Activated CD4-positive, alpha-beta memory T cell treated with anti-CD3 and anti-CD28 coated beads for 36 hours (primary cell): ENCODE measurements at regions of chr4 and their contacts with region 1.

Region 1: GRCh38 chr4:140252742-140253555 is 99.0 kb upstream of the MAML3 start:
- DNase-seq: peak; percentile 63
- H3K4me3 Mint-ChIP-seq: peak overlapping the region; percentile 55
- H3K27ac Mint-ChIP-seq: no peak overlapping the region
- H3K4me1 Mint-ChIP-seq: peaks cover 17% of the 10 kb centered on the region
- H3K27me3 Mint-ChIP-seq: peaks cover 20% of the 10 kb centered on the region

Region 2: DNA sequence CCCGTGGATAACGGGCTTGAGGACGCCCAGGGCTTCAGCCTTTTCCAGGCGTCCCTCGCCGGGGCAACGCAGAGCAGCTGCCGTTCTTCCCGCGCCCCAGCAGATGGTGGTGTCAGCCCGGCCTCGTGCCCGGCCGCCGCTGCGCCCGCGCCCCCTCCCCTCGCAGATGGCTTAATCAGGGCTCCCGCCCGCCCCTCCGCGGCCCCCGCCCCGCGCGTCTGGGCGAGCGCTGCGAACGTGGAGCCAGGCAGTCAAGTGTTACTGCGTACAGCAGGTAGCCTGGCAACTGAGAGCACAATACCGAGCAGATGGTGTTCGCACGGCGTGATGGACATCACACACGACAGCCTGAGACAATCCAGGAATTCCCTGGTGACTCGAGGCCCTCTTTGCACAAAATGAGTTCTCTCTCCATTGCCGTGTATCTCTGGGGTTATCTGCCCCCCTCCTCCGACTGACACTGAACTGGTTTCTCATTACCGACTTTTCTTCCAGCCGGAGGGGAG is 518.0 kb before region 1 on chr4:
- CTCF ChIA-PET with region 1: interaction called, 20 read pairs
- POLR2A ChIA-PET with region 1: no interaction called
- intact Hi-C with region 1: loop called (anchors 5 kb)
- DNase-seq: peak; percentile 73
- H3K4me3 Mint-ChIP-seq: peak overlapping the region; percentile 46
- H3K27ac Mint-ChIP-seq: no peak overlapping the region
- H3K4me1 Mint-ChIP-seq: peaks cover 16% of the 10 kb centered on the region
- H3K27me3 Mint-ChIP-seq: peaks cover 40% of the 10 kb centered on the region

Region 3: GRCh38 chr4:140012688-140013486 is 240.1 kb before region 1 on chr4:
- CTCF ChIA-PET with region 1: interaction called, 60 read pairs
- POLR2A ChIA-PET with region 1: no interaction called
- intact Hi-C with region 1: loop called (anchors 1 kb)
- DNase-seq: peak; percentile 62
- H3K4me3 Mint-ChIP-seq: no peak overlapping the region
- H3K27ac Mint-ChIP-seq: no peak overlapping the region
- H3K4me1 Mint-ChIP-seq: no peaks in the 10 kb centered on the region
- H3K27me3 Mint-ChIP-seq: peaks cover 11% of the 10 kb centered on the region

Region 4: DNA sequence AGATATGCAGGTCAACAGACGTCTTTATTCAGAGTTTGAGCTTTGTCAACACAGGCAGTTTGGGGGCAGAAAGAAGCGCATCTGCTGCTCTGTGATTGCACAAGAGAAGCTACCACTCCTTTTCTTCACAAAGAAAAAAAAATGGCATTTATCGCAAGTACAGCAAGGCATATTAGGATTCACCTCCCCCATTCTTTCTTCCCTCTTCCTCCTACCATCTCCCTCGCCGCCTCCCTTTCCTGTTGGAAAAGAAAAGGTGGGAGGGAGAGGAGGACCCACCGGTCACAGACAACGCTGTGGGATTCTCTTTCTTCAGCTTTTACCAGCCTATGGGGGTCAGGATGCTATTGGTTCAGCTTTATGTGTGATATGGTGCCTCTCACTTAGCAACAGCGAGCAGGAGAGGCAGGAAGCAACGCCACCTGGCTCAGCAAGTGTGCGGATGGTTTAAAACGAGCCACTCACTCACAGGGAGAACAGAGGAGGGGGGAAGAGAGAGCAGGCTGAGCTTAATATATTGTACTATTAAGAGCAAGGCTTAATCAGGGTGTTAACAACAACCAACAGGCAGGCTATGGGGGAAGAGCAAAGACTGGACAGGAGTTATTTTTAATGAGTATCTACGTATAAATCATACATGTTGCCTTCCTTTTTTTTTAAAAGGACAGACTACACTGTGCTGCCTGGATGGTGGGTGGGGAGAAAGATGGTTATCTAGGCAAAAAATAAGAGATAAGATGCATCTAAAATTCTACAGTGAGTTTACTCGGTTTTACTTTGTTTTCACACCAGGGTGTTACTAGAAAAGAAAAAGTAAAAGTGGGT is 203.7 kb before region 1 on chr4:
- CTCF ChIA-PET with region 1: interaction called, 17 read pairs
- POLR2A ChIA-PET with region 1: no interaction called
- intact Hi-C with region 1: loop called (anchors 1 kb)
- DNase-seq: peak; percentile 62
- H3K4me3 Mint-ChIP-seq: peak overlapping the region; percentile 57
- H3K27ac Mint-ChIP-seq: no peak overlapping the region
- H3K4me1 Mint-ChIP-seq: peaks cover 24% of the 10 kb centered on the region
- H3K27me3 Mint-ChIP-seq: peaks cover 32% of the 10 kb centered on the region

Region 5: GRCh38 chr4:140095694-140096482 is 157.1 kb before region 1 on chr4:
- CTCF ChIA-PET with region 1: no interaction called
- POLR2A ChIA-PET with region 1: no interaction called
- intact Hi-C with region 1: loop called (anchors 5 kb)
- DNase-seq: peak; percentile 75
- H3K4me3 Mint-ChIP-seq: peak overlapping the region; percentile 75
- H3K27ac Mint-ChIP-seq: peak overlapping the region; percentile 98
- H3K4me1 Mint-ChIP-seq: peaks cover 71% of the 10 kb centered on the region
- H3K27me3 Mint-ChIP-seq: no peaks in the 10 kb centered on the region

Region 6: GRCh38 chr4:140233791-140234696 is 18.9 kb before region 1 on chr4:
- CTCF ChIA-PET with region 1: interaction called, 18 read pairs
- POLR2A ChIA-PET with region 1: no interaction called
- intact Hi-C with region 1: no loop called
- DNase-seq: no peak
- H3K4me3 Mint-ChIP-seq: peak overlapping the region; percentile 21
- H3K27ac Mint-ChIP-seq: peak overlapping the region; percentile 78
- H3K4me1 Mint-ChIP-seq: peaks cover 12% of the 10 kb centered on the region
- H3K27me3 Mint-ChIP-seq: peaks cover 9% of the 10 kb centered on the region